CD4-positive, alpha-beta T cell (primary cell): ENCODE measurements at regions of chr4 and their contacts with region 1.

Region 1: GRCh38 chr4:67545199-67546003 is at the start of gene CENPC:
- DNase-seq: peak; percentile 80 to 96 (median 88)
- ATAC-seq: peak; percentile 87
- H3K4me3 ChIP-seq: peak within 1 kb of the TSS; percentile 84
- H3K4me3 Mint-ChIP-seq: peak within 1 kb of the TSS; percentile 98
- H3K27ac ChIP-seq: peak within 1 kb of the TSS; percentile 96
- H3K27ac Mint-ChIP-seq: peak within 1 kb of the TSS; percentile 97
- H3K4me1 ChIP-seq: no peaks in the 10 kb centered on the region
- H3K4me1 Mint-ChIP-seq: peaks cover 44% of the 10 kb centered on the region
- H3K27me3 ChIP-seq: no peaks in the 10 kb centered on the region
- H3K27me3 Mint-ChIP-seq: no peaks in the 10 kb centered on the region
- CTCF ChIP-seq: no peak
- total RNA-seq, gene CENPC: 115 to 116 TPM

Region 2: DNA sequence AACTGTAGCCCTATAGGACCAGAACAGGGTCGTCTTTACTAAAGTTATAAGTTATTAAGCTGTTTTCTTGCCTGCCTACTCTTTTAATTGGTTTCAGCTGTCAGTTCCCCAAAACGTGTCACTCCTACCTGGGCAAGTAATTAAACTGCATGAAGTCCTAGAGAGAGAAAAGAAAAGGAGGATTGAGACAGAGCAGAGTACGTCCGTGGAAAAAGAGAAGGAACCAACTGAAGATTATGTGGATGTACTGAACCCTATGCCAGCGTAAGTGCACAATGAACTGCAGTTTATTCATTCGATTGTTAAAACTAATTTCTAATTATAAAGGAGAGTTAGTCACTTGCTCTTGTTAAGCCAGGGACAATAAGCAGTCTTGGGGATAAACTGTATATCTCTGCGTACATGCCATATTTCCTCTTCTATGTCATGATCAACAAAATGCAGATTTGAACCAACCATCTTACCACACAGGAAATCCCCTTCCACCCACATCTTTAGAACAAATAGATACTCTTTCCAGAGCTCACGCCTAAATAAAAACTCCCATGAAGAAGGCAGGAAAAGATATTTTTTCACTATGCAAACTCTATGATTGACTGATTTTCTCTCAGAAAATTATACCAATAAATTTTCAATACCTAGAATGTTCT is 35.9 kb after region 1 on chr4:
- CTCF ChIA-PET with region 1: no interaction called
- POLR2A ChIA-PET with region 1: interaction called, 21 read pairs
- intact Hi-C with region 1: loop called in 1 of 2 experiments (anchors 5 kb)
- DNase-seq: peak in 3 of 14 experiments; percentile 58 to 78 (median 75)
- ATAC-seq: peak; percentile 94
- H3K4me3 ChIP-seq: peak overlapping the region; percentile 13
- H3K4me3 Mint-ChIP-seq: peak overlapping the region; percentile 63
- H3K27ac ChIP-seq: peak overlapping the region in 1 of 2 donors; percentile 6
- H3K27ac Mint-ChIP-seq: peak overlapping the region; percentile 75
- H3K4me1 ChIP-seq: peaks cover 16% of the 10 kb centered on the region
- H3K4me1 Mint-ChIP-seq: peaks cover 48% of the 10 kb centered on the region
- H3K27me3 ChIP-seq: no peaks in the 10 kb centered on the region
- H3K27me3 Mint-ChIP-seq: no peaks in the 10 kb centered on the region
- CTCF ChIP-seq: no peak

Region 3: GRCh38 chr4:67700738-67701516 is 155.5 kb after region 1 on chr4 and contains the start of gene UBA6:
- CTCF ChIA-PET with region 1: interaction called, 8 read pairs
- POLR2A ChIA-PET with region 1: interaction called, 40 read pairs
- intact Hi-C with region 1: loop called (anchors 2 kb)
- DNase-seq: peak; percentile 89 to 97 (median 93)
- ATAC-seq: peak; percentile 96
- H3K4me3 ChIP-seq: peak within 1 kb of the TSS; percentile 92
- H3K4me3 Mint-ChIP-seq: peak within 1 kb of the TSS; percentile 97
- H3K27ac ChIP-seq: peak within 1 kb of the TSS; percentile 66 to 85
- H3K27ac Mint-ChIP-seq: peak within 1 kb of the TSS; percentile 93
- H3K4me1 ChIP-seq: peaks cover 15% of the 10 kb centered on the region
- H3K4me1 Mint-ChIP-seq: peaks cover 74% of the 10 kb centered on the region
- H3K27me3 ChIP-seq: no peaks in the 10 kb centered on the region
- H3K27me3 Mint-ChIP-seq: no peaks in the 10 kb centered on the region
- CTCF ChIP-seq: peak; percentile 62
- total RNA-seq, gene UBA6: 33.4 to 45.5 TPM

Region 4: GRCh38 chr4:67909905-67910584 is 364.6 kb after region 1 on chr4:
- CTCF ChIA-PET with region 1: no interaction called
- POLR2A ChIA-PET with region 1: no interaction called
- intact Hi-C with region 1: loop called (anchors 1 to 2 kb)
- DNase-seq: peak in 3 of 14 experiments; percentile 21 to 37 (median 33)
- ATAC-seq: no peak
- H3K4me3 ChIP-seq: no peak overlapping the region
- H3K4me3 Mint-ChIP-seq: no peak overlapping the region
- H3K27ac ChIP-seq: no peak overlapping the region
- H3K27ac Mint-ChIP-seq: no peak overlapping the region
- H3K4me1 ChIP-seq: no peaks in the 10 kb centered on the region
- H3K4me1 Mint-ChIP-seq: no peaks in the 10 kb centered on the region
- H3K27me3 ChIP-seq: peaks cover 0 to 13% of the 10 kb centered on the region in 2 experiments
- H3K27me3 Mint-ChIP-seq: peaks cover 10% of the 10 kb centered on the region
- CTCF ChIP-seq: peak; percentile 72

Region 5: DNA sequence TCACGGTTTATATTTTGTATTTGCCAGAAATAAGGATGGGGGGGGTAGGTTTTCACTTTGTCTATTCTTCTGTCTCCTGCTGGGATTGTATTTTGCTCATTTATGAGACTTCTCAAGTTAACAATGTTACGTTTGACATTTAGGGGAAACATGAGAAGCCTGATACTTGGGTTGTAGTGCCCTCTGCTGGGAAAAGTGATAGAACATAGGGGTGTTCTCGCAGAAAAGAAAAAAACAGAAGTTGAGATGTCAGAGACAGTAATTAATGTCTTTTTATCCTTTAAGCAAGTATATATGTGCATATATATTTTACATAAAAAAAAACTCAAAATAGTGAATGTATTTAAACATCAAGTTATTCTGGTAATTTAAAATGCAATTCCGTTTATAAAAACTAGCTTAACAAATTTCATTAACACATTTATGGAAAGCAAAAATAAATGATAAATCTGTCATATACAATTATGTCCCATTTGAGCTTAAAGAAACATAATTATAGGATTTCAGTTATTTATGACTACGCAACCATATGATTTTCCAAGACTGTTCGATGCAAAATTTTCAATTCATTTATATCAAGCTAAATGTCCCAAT is 630.3 kb after region 1 on chr4:
- CTCF ChIA-PET with region 1: no interaction called
- POLR2A ChIA-PET with region 1: no interaction called
- intact Hi-C with region 1: loop called (anchors 5 kb)
- DNase-seq: peak in 4 of 14 experiments; percentile 8 to 47 (median 36)
- ATAC-seq: no peak
- H3K4me3 ChIP-seq: no peak overlapping the region
- H3K4me3 Mint-ChIP-seq: no peak overlapping the region
- H3K27ac ChIP-seq: no peak overlapping the region
- H3K27ac Mint-ChIP-seq: no peak overlapping the region
- H3K4me1 ChIP-seq: no peaks in the 10 kb centered on the region
- H3K4me1 Mint-ChIP-seq: no peaks in the 10 kb centered on the region
- H3K27me3 ChIP-seq: no peaks in the 10 kb centered on the region
- H3K27me3 Mint-ChIP-seq: peaks cover 12% of the 10 kb centered on the region
- CTCF ChIP-seq: peak; percentile 52

Region 6: DNA sequence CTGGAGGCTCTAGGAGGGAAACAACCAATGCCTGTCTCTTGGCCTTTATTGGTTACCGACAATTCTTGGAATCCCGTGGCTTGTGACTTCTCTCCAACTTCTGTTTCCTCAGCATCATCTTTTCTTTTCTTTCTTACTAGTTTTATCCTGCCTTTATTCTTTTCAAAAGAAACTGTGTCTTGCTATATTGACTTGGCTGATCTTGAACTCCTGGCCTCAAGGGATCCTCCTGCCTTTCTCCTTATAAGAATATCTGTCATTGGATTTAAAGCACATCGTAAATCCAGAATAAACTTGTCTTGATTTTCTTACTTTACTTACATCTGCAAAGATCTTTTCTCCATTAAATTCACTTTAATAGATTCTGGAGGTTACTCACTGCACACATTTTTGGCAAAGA is 1220.5 kb after region 1 on chr4:
- CTCF ChIA-PET with region 1: no interaction called
- POLR2A ChIA-PET with region 1: no interaction called
- intact Hi-C with region 1: no loop called
- DNase-seq: no peak
- ATAC-seq: no peak
- H3K4me3 ChIP-seq: no peak overlapping the region
- H3K4me3 Mint-ChIP-seq: no peak overlapping the region
- H3K27ac ChIP-seq: no peak overlapping the region
- H3K27ac Mint-ChIP-seq: no peak overlapping the region
- H3K4me1 ChIP-seq: no peaks in the 10 kb centered on the region
- H3K4me1 Mint-ChIP-seq: no peaks in the 10 kb centered on the region
- H3K27me3 ChIP-seq: no peaks in the 10 kb centered on the region
- H3K27me3 Mint-ChIP-seq: no peaks in the 10 kb centered on the region
- CTCF ChIP-seq: no peak